H1 (cell line): ENCODE measurements at regions of chr2 and their contacts with region 1.

Region 1: DNA sequence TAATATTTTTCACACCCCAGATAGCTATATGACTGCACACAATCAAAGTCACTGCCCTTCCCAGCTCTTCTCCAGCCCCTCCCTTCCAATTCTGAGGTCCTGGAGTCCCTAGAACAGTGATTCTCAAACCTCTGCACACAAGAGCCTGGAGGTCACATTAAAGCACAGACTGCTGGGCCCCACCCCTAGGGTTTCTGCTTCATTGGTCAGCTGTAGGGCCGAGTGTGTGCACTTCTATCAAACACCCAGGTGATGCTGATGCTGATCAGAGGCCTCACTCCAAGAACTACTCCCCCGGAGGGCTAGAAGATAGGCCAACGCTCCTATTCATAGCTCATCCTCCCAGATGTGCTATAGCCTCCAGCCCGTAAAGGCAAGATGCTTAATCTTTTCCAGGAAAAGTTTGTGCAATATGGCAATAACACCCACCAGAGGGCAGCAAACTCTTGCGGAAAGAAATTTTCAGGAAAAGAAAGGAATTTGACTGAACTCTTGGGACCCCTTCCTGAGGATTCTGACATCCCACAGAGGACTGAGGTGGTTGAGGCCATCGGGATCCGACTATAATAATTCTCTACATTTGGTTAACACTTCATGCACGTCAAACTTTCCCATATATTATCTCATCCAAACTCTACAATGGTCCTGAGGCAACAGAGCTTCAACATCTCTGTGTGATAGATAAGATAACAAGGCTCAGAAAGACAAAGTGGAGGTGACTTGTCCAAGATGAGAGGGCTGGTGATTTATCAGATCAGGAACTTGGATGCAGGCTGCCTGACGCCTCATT is 194.2 kb upstream of the PKDCC start:
- DNase-seq: peak; percentile 21 to 79
- H3K4me3 ChIP-seq: no peak overlapping the region
- H3K27ac ChIP-seq: no peak overlapping the region
- H3K4me1 ChIP-seq: peaks cover 0 to 3% (median 0%) of the 10 kb centered on the region in 4 experiments; a peak in 2 of 7 replicates
- H3K27me3 ChIP-seq: no peaks in the 10 kb centered on the region
- CTCF ChIP-seq: peak in 2 of 3 experiments; percentile 73 to 76; a peak in 3 of 4 replicates
- EP300 ChIP-seq: no peak
- POLR2A ChIP-seq: no peak
- RAD21 ChIP-seq: peak; percentile 92 to 97

Region 2: DNA sequence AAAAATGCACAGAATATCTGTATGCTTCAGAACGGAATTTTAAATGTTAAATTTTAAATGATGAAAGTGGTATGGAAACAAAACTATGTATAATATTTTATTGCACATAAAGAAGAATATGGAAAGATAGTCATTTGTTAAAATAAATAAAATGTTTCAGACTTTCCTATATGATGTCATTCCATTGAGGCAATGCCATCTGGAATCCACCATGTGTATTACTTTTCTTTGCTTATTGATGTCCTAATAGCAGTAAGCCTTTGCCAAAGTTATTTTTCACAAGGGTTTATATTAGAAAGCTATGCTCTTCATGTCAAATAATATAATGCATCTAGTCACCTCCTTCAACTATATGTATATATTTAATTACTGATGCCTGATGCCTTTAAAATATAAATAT is 407.4 kb before region 1 on chr2:
- CTCF ChIA-PET with region 1: no interaction called
- POLR2A ChIA-PET with region 1: no interaction called
- DNase-seq: no peak
- H3K4me3 ChIP-seq: no peak overlapping the region
- H3K27ac ChIP-seq: no peak overlapping the region
- H3K4me1 ChIP-seq: no peaks in the 10 kb centered on the region
- H3K27me3 ChIP-seq: no peaks in the 10 kb centered on the region
- CTCF ChIP-seq: no peak
- EP300 ChIP-seq: no peak
- POLR2A ChIP-seq: no peak
- RAD21 ChIP-seq: no peak

Region 3: DNA sequence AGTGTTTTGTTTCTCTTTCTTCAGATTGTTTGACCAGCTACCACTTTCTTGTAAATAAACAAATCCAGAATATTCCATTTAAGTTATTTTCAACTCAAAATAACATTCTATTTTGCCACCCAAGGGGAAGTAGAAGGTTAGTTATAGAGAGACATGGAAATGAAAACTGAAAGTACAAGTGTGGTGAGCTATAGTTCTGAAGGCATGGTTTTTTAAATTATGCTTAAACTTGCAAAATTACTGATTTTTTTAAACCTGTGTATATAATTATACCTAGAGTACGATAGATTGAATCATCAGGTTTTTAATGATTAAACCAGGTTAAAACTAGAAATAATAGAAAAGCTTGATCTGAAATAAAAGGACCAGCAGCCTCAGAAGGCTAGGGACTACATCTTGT is 133.3 kb before region 1 on chr2:
- CTCF ChIA-PET with region 1: no interaction called
- POLR2A ChIA-PET with region 1: no interaction called
- DNase-seq: no peak
- H3K4me3 ChIP-seq: no peak overlapping the region
- H3K27ac ChIP-seq: no peak overlapping the region
- H3K4me1 ChIP-seq: peaks cover 0 to 6% (median 0%) of the 10 kb centered on the region in 4 experiments; a peak in 1 of 7 replicates
- H3K27me3 ChIP-seq: no peaks in the 10 kb centered on the region
- CTCF ChIP-seq: no peak
- EP300 ChIP-seq: no peak
- POLR2A ChIP-seq: no peak
- RAD21 ChIP-seq: no peak

Region 4: GRCh38 chr2:41759880-41760279 is 93.7 kb before region 1 on chr2:
- CTCF ChIA-PET with region 1: no interaction called
- POLR2A ChIA-PET with region 1: no interaction called
- DNase-seq: no peak
- H3K4me3 ChIP-seq: no peak overlapping the region
- H3K27ac ChIP-seq: no peak overlapping the region
- H3K4me1 ChIP-seq: no peaks in the 10 kb centered on the region
- H3K27me3 ChIP-seq: no peaks in the 10 kb centered on the region
- CTCF ChIP-seq: no peak
- EP300 ChIP-seq: no peak
- POLR2A ChIP-seq: no peak
- RAD21 ChIP-seq: no peak

Region 5: GRCh38 chr2:41840702-41841551 is 12.7 kb before region 1 on chr2:
- CTCF ChIA-PET with region 1: interaction called, 52 read pairs
- POLR2A ChIA-PET with region 1: no interaction called
- DNase-seq: peak; percentile 95 to 99
- H3K4me3 ChIP-seq: peak overlapping the region; percentile 46 to 84 (median 78)
- H3K27ac ChIP-seq: peak overlapping the region; percentile 17; the same call in 1 of the 2 replicates
- H3K4me1 ChIP-seq: peaks cover 0 to 4% (median 0%) of the 10 kb centered on the region in 4 experiments; a peak in 2 of 7 replicates
- H3K27me3 ChIP-seq: no peaks in the 10 kb centered on the region; a peak in 3 of 7 replicates
- CTCF ChIP-seq: peak; percentile 99
- EP300 ChIP-seq: no peak
- POLR2A ChIP-seq: peak in 1 of 2 experiments; percentile 79; a peak in 2 of 3 replicates
- RAD21 ChIP-seq: peak; percentile 86 to 90

Region 6: GRCh38 chr2:41879235-41879916 is 25.8 kb after region 1 on chr2:
- CTCF ChIA-PET with region 1: interaction called, 280 read pairs
- POLR2A ChIA-PET with region 1: no interaction called
- DNase-seq: no peak
- H3K4me3 ChIP-seq: no peak overlapping the region
- H3K27ac ChIP-seq: no peak overlapping the region
- H3K4me1 ChIP-seq: peaks cover 0 to 7% (median 1%) of the 10 kb centered on the region in 4 experiments; a peak in 2 of 7 replicates
- H3K27me3 ChIP-seq: no peaks in the 10 kb centered on the region
- CTCF ChIP-seq: no peak
- EP300 ChIP-seq: no peak
- POLR2A ChIP-seq: no peak
- RAD21 ChIP-seq: no peak

Region 7: GRCh38 chr2:41926614-41927580 is 73.3 kb after region 1 on chr2:
- CTCF ChIA-PET with region 1: no interaction called
- POLR2A ChIA-PET with region 1: no interaction called
- DNase-seq: no peak
- H3K4me3 ChIP-seq: no peak overlapping the region
- H3K27ac ChIP-seq: no peak overlapping the region
- H3K4me1 ChIP-seq: no peaks in the 10 kb centered on the region
- H3K27me3 ChIP-seq: no peaks in the 10 kb centered on the region
- CTCF ChIP-seq: no peak
- EP300 ChIP-seq: no peak
- POLR2A ChIP-seq: no peak
- RAD21 ChIP-seq: no peak

Region 8: GRCh38 chr2:42053791-42054701 is 200.4 kb after region 1 on chr2:
- CTCF ChIA-PET with region 1: interaction called, 33 read pairs
- POLR2A ChIA-PET with region 1: no interaction called
- DNase-seq: no peak
- H3K4me3 ChIP-seq: no peak overlapping the region
- H3K27ac ChIP-seq: no peak overlapping the region
- H3K4me1 ChIP-seq: peaks cover 5 to 45% (median 36%) of the 10 kb centered on the region in 4 experiments
- H3K27me3 ChIP-seq: peaks cover 0 to 6% (median 4%) of the 10 kb centered on the region in 4 experiments; a peak in 5 of 7 replicates
- CTCF ChIP-seq: no peak
- EP300 ChIP-seq: no peak
- POLR2A ChIP-seq: no peak
- RAD21 ChIP-seq: no peak

Region 9: DNA sequence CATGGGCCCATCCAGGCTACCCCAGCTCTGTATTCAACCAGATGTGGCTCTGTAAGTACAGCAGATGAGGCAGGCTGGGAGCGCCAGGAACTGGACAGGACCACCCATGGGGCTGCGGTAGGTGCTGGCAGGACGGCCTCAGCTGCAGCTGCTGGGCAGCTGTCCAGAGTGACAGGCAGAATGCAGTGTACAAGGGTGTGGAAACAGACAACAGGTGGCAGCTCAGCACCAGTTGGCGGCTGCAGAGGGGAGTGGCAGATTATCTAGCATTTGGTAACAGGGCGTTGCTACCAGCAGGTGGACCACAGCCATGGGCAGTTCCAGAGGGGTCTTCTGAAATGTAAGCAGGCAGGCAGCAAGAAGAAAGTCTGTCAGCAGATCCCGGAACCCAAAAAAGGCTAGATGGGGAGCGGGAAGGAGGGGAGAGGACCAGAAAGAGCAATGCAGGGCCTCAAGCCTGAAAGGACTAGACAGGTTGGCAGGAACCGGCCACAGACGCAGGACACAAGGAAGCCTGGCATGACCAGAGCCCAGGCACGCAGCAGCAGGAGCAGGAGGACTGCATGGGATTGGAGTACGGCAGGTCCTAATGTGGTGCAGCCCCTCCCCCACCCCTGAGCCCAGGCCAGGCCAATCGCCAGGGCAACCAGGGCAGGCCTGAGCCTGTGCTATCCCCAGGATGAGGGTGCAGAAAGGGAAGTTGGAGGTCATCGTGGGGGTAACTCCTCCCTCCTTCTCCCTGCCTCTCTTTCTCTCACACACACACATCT is 218.9 kb after region 1 on chr2:
- CTCF ChIA-PET with region 1: interaction called, 490 read pairs
- POLR2A ChIA-PET with region 1: no interaction called
- DNase-seq: no peak
- H3K4me3 ChIP-seq: no peak overlapping the region
- H3K27ac ChIP-seq: no peak overlapping the region
- H3K4me1 ChIP-seq: peaks cover 0 to 9% (median 0%) of the 10 kb centered on the region in 4 experiments; a peak in 3 of 7 replicates
- H3K27me3 ChIP-seq: no peaks in the 10 kb centered on the region
- CTCF ChIP-seq: peak; percentile 9 to 30 (median 19)
- EP300 ChIP-seq: no peak
- POLR2A ChIP-seq: no peak
- RAD21 ChIP-seq: peak in 1 of 2 experiments; percentile 19; a peak in 1 of 4 replicates